ENCODE measurements at regions of chr10 and their contacts with region 1.

Region 1: GRCh38 chr10:94042001-94042833 is 48.5 kb downstream of the PLCE1 start:
- DNase-seq: peak; percentile 75 to 87
- ATAC-seq: peak; percentile 77 to 86
- H3K4me3 ChIP-seq: 0 out of 3 replicates have a peak overlapping the region, but pooled peaks have one; percentile 9
- H3K27ac ChIP-seq: peak overlapping the region; percentile 91
- H3K4me1 ChIP-seq: peaks cover 82% of the 10 kb centered on the region
- CTCF ChIP-seq: peak; percentile 51
- EP300 ChIP-seq: peak; percentile 48; a peak in 1 of 5 replicates
- POLR2A ChIP-seq: no peak
- RAD21 ChIP-seq: peak; percentile 42 to 67; a peak in 4 of 5 replicates

Region 2: GRCh38 chr10:93838278-93838677 is 203.9 kb before region 1 on chr10:
- CTCF ChIA-PET with region 1: no interaction called
- POLR2A ChIA-PET with region 1: no interaction called
- DNase-seq: no peak
- ATAC-seq: no peak
- H3K4me3 ChIP-seq: no peak overlapping the region
- H3K27ac ChIP-seq: no peak overlapping the region
- H3K4me1 ChIP-seq: no peaks in the 10 kb centered on the region
- CTCF ChIP-seq: no peak
- EP300 ChIP-seq: no peak
- POLR2A ChIP-seq: no peak
- RAD21 ChIP-seq: no peak

Region 3: GRCh38 chr10:93968540-93968945 is 73.7 kb before region 1 on chr10:
- CTCF ChIA-PET with region 1: no interaction called
- POLR2A ChIA-PET with region 1: no interaction called
- DNase-seq: no peak
- ATAC-seq: peak in 1 of 2 experiments; percentile 28; a peak in 2 of 6 replicates
- H3K4me3 ChIP-seq: no peak overlapping the region
- H3K27ac ChIP-seq: no peak overlapping the region
- H3K4me1 ChIP-seq: no peaks in the 10 kb centered on the region
- CTCF ChIP-seq: no peak
- EP300 ChIP-seq: no peak
- POLR2A ChIP-seq: no peak
- RAD21 ChIP-seq: no peak

Region 4: GRCh38 chr10:94027196-94027595 is 15.0 kb before region 1 on chr10:
- CTCF ChIA-PET with region 1: interaction called, 15 read pairs
- POLR2A ChIA-PET with region 1: no interaction called
- DNase-seq: peak in 1 of 2 experiments; percentile 93
- ATAC-seq: peak; percentile 94 to 97
- H3K4me3 ChIP-seq: no peak overlapping the region
- H3K27ac ChIP-seq: peak overlapping the region; percentile 61 to 78
- H3K4me1 ChIP-seq: peaks cover 22% of the 10 kb centered on the region
- CTCF ChIP-seq: no peak
- EP300 ChIP-seq: peak; percentile 54 to 56; a peak in 3 of 5 replicates
- POLR2A ChIP-seq: no peak
- RAD21 ChIP-seq: peak; percentile 24 to 42; a peak in 4 of 5 replicates

Region 5: GRCh38 chr10:94232709-94233383 is 190.6 kb after region 1 on chr10:
- CTCF ChIA-PET with region 1: no interaction called
- POLR2A ChIA-PET with region 1: no interaction called
- DNase-seq: no peak
- ATAC-seq: no peak
- H3K4me3 ChIP-seq: no peak overlapping the region
- H3K27ac ChIP-seq: no peak overlapping the region
- H3K4me1 ChIP-seq: no peaks in the 10 kb centered on the region
- CTCF ChIP-seq: no peak
- EP300 ChIP-seq: no peak
- POLR2A ChIP-seq: no peak
- RAD21 ChIP-seq: no peak

Region 6: GRCh38 chr10:94264085-94264484 is 221.9 kb after region 1 on chr10:
- CTCF ChIA-PET with region 1: no interaction called
- POLR2A ChIA-PET with region 1: no interaction called
- DNase-seq: no peak
- ATAC-seq: no peak
- H3K4me3 ChIP-seq: no peak overlapping the region
- H3K27ac ChIP-seq: no peak overlapping the region
- H3K4me1 ChIP-seq: peaks cover 5% of the 10 kb centered on the region; the same call in 1 of the 3 replicates
- CTCF ChIP-seq: no peak
- EP300 ChIP-seq: no peak
- POLR2A ChIP-seq: no peak
- RAD21 ChIP-seq: no peak

Measured in A549 (cell line).